ENCODE measurements at regions of chrX and their contacts with region 1.

Region 1: GRCh38 chrX:85111347-85111746 is 107.7 kb downstream of the APOOL start:
- DNase-seq: no peak
- H3K4me3 ChIP-seq: no peak overlapping the region
- H3K27ac ChIP-seq: no peak overlapping the region
- H3K4me1 ChIP-seq: no peaks in the 10 kb centered on the region
- H3K27me3 ChIP-seq: no peaks in the 10 kb centered on the region
- CTCF ChIP-seq: peak in 3 of 4 experiments; percentile 43 to 52 (median 43)
- POLR2A ChIP-seq: no peak

Region 2: GRCh38 chrX:85544609-85545008 is 433.3 kb after region 1 on chrX:
- intact Hi-C with region 1: loop called (anchors 10 kb)
- DNase-seq: no peak
- H3K4me3 ChIP-seq: no peak overlapping the region
- H3K27ac ChIP-seq: no peak overlapping the region
- H3K4me1 ChIP-seq: no peaks in the 10 kb centered on the region
- H3K27me3 ChIP-seq: no peaks in the 10 kb centered on the region
- CTCF ChIP-seq: peak in 2 of 4 experiments; percentile 27 to 28
- POLR2A ChIP-seq: no peak